Endothelial cell of umbilical vein (primary cell): ENCODE measurements at regions of chr1 and their contacts with region 1.

Region 1: GRCh38 chr1:28602536-28603439 is 10.7 kb downstream of the RAB42 start:
- DNase-seq: peak; percentile 72
- H3K4me3 ChIP-seq: no peak overlapping the region
- H3K27ac ChIP-seq: no peak overlapping the region
- H3K4me1 ChIP-seq: peaks cover 8% of the 10 kb centered on the region
- H3K27me3 ChIP-seq: no peaks in the 10 kb centered on the region
- CTCF ChIP-seq: peak; percentile 63 to 64
- POLR2A ChIP-seq: no peak

Region 2: GRCh38 chr1:28354121-28354520 is 248.7 kb before region 1 on chr1:
- CTCF ChIA-PET with region 1: interaction called, 192 read pairs
- POLR2A ChIA-PET with region 1: interaction called, 5 read pairs
- dilution Hi-C with region 1: no loop called
- intact Hi-C with region 1: loop called (anchors 1 kb)
- DNase-seq: no peak
- H3K4me3 ChIP-seq: no peak overlapping the region
- H3K27ac ChIP-seq: no peak overlapping the region
- H3K4me1 ChIP-seq: no peaks in the 10 kb centered on the region
- H3K27me3 ChIP-seq: no peaks in the 10 kb centered on the region
- CTCF ChIP-seq: no peak
- POLR2A ChIP-seq: no peak

Region 3: DNA sequence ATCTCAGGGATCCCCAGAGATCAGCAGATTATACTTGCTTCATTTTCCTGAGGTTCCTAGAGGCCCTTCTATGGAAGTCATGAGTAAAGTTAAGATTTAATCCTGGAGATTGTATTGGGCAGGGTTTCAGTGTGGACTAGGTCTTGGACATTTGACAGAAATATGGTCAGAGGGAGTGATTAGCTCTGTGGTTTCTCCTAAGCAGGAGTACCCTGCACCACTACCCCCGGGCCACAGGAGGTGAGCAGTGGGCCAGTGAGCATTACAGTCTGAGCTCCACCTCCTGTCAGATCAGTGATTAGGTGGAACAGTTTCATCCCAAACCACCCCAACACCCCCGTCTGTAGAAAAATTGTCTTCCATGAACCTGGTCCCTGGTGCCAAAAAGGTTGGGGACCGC is 190.1 kb before region 1 on chr1:
- CTCF ChIA-PET with region 1: interaction called, 37 read pairs
- POLR2A ChIA-PET with region 1: no interaction called
- dilution Hi-C with region 1: no loop called
- intact Hi-C with region 1: loop called (anchors 1 kb)
- DNase-seq: no peak
- H3K4me3 ChIP-seq: no peak overlapping the region
- H3K27ac ChIP-seq: no peak overlapping the region
- H3K4me1 ChIP-seq: peaks cover 18% of the 10 kb centered on the region
- H3K27me3 ChIP-seq: no peaks in the 10 kb centered on the region
- CTCF ChIP-seq: no peak
- POLR2A ChIP-seq: no peak

Region 4: DNA sequence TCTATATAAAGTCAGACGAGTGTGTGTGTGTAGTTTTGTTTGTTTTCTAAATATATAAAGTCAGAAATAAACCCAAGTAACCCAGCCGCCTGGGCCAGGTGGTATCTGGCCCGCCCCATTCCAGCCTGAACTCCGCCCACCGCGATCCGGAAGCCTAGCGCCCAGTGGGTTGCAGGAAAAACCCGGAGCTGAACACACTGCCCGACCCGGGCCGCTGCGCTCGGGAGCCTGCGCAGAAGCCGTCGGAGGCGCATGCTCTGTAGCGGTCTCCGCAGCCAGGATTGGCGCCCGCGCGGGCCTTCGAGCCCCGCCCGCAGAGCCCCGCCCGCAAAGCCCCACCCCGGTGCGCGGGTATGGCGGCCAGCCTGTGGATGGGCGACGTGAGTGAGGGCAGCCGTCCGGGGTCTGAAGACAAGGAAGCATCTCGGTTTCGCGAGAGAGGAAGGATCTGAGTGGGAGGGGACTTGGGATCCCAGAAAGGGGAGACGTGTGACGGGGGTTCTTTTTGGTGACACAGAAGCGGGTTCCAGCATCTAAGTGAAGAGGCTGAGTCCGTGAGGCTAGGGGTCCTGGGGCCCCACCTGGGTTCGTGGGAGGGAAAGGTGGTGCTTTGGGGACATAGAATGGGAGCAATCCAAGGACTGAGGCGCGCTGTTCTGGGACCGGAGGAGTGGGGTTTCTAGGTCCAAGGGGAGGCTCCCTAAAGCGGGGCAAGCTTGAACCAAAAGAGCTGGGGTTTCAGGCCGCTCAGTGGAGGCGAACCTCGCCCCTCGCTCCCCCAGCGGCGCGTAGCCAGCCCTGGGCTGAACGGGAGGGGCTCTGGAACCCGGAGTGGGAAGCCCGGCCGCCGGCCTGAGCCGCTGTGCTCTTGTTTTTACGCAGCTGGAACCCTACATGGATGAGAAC is 49.8 kb before region 1 on chr1 and contains the start of gene TRNAU1AP:
- CTCF ChIA-PET with region 1: interaction called, 15 read pairs
- POLR2A ChIA-PET with region 1: no interaction called
- dilution Hi-C with region 1: no loop called
- intact Hi-C with region 1: loop called (anchors 2 kb)
- DNase-seq: peak; percentile 98
- H3K4me3 ChIP-seq: peak within 1 kb of the TSS; percentile 79 to 86 (median 85)
- H3K27ac ChIP-seq: peak within 1 kb of the TSS; percentile 39
- H3K4me1 ChIP-seq: peaks cover 12% of the 10 kb centered on the region
- H3K27me3 ChIP-seq: no peaks in the 10 kb centered on the region
- CTCF ChIP-seq: no peak
- POLR2A ChIP-seq: peak; percentile 86
- total RNA-seq, gene TRNAU1AP: 46.2 and 49.0 TPM in 2 replicates

Region 5: GRCh38 chr1:28613175-28613574 is 10.4 kb after region 1 on chr1:
- CTCF ChIA-PET with region 1: interaction called, 11 read pairs
- POLR2A ChIA-PET with region 1: no interaction called
- dilution Hi-C with region 1: no loop called
- intact Hi-C with region 1: no loop called
- DNase-seq: no peak
- H3K4me3 ChIP-seq: no peak overlapping the region
- H3K27ac ChIP-seq: no peak overlapping the region
- H3K4me1 ChIP-seq: no peaks in the 10 kb centered on the region
- H3K27me3 ChIP-seq: no peaks in the 10 kb centered on the region
- CTCF ChIP-seq: no peak
- POLR2A ChIP-seq: no peak